MCF 10A (cell line): ENCODE measurements at regions of chr1 and their contacts with region 1.

Region 1: DNA sequence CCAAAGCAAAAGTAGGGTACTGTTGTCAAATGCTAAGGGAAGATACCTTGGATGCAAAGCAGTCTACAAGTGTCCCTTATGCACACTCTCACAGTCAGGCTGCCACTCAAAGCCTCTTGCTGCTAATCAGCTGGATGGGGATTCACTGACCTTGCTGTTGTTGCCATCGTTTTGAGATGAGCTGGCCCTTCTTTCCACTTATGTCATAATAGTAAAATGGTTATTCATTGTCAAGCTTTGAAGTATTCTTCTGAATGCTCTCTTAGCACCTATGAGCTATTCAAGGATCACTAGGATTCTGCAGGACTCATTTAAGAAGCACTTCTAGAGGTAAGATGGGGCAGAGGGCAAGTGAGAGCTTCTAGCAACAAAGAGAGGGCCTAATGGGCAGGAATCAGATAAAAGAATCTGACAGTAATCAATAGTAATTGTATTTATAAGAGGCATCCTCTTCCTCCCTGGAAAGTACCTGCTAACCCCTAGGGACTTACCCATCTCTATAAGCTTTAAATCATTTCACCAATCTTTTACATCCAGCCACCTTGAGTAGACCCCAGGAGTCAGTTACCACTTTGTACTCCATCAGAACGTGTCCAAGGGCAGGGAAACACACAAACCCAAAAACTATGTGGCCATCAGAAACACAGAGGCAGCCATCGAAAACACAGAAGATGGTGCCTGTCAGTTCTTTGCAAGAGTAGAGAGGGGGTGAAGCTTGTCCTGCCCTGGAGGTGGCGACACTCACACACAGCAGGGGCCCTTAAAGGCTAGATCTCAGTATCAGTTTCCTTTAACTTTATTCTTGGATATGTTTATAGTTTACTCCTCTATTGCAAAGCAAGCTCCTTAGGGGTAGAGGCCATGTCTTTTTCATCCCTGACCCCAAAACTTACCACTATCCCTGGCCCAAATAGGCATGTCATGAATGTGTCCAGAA is 103.7 kb upstream of the NFIA start:
- DNase-seq: peak; percentile 62
- H3K4me3 Mint-ChIP-seq: no peak overlapping the region
- H3K27ac Mint-ChIP-seq: no peak overlapping the region
- H3K4me1 Mint-ChIP-seq: peaks cover 3% of the 10 kb centered on the region
- H3K27me3 Mint-ChIP-seq: no peaks in the 10 kb centered on the region
- CTCF ChIP-seq: peak; percentile 76

Region 2: DNA sequence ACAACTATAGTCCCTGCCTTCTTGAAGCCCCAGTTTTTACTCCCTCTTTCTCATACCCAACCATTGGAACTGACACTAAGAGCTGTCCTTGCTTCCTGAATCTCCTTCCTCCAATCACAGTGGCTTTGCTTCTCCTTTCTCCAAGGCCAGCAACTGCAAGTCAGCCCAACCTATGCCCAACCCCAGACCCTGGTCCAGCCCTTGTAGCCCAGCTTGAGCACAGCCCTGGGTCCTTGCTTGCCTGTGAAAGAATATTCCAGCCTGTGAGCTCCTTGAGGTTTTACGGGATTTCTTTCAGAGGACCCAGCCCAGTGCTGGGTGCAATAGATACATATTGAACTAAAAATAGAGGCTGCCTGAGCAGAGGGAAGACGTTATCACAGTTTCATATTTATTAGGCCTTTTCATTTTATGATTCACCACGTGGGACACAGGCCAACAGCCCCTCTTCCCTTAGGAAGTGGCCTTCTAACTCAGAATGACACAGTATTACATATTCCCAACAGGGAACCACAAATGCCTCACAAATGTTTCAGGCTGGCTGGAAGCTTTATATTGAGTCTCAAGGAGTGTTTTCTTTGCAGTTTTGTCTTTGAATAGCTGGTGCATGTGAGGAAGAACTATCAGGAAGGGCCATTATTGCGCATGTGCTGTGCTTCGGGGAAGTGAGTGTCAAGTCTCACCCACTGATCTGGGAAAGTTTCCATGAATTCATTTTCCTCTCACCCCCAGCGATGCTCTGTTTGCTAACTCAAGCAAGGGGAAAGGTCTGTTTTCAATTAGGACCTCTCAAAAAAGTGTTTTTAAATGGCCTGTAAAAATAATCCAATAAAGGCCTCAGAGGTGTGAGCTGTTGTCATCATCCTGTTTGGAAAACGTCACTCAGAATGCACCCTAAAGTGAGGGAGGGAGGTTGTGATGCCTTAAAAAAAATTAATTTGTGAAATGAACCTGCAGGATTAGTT is 11.3 kb after region 1 on chr1:
- CTCF ChIA-PET with region 1: interaction called, 62 read pairs
- POLR2A ChIA-PET with region 1: interaction called, 3 read pairs
- intact Hi-C with region 1: no loop called
- DNase-seq: peak; percentile 29
- H3K4me3 Mint-ChIP-seq: no peak overlapping the region
- H3K27ac Mint-ChIP-seq: no peak overlapping the region
- H3K4me1 Mint-ChIP-seq: no peaks in the 10 kb centered on the region
- H3K27me3 Mint-ChIP-seq: no peaks in the 10 kb centered on the region
- CTCF ChIP-seq: no peak

Region 3: DNA sequence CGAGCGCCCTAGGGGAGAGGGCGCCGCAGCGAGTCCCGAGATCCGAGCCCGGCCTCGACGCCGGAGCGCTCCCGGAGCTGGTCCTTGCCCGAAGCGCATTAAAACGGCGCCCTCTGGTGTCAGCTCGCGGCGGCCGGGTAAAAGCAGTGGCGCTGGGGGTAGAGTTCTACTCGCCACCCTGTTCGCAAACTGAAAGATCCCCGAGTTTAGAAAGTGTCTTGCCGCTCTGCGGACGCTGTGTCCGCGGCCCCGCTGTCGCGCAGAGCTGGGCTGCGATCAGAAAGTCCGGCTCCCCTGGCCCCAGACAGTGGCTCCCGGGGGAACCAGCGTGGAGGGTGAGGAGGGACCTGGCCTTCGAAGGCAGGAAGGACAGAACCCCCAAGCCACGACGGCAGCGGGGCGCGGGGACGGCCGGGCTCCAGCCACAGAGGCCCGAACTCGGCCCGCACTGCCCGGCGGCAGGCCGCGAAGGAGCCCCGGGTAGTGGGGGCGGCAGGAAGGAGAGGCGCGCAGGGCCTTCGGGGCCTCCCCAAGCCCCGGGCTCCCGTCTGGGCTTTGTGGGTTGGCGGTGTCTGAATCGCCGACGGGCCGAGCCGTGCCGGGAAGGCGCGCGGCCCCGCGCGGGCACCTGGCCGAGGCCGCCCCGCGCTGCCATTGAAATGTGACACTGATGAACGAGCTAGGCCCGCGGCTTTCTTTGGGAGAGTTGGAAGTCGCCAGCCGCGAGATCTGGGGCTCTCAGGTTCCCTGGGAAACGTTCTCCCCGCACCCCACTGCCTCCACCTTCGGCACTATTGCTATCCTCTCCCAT is 64.5 kb after region 1 on chr1:
- CTCF ChIA-PET with region 1: interaction called, 100 read pairs
- POLR2A ChIA-PET with region 1: interaction called, 9 read pairs
- intact Hi-C with region 1: loop called (anchors 1 kb)
- DNase-seq: peak; percentile 64
- H3K4me3 Mint-ChIP-seq: peak overlapping the region; percentile 31
- H3K27ac Mint-ChIP-seq: no peak overlapping the region
- H3K4me1 Mint-ChIP-seq: peaks cover 12% of the 10 kb centered on the region
- H3K27me3 Mint-ChIP-seq: no peaks in the 10 kb centered on the region
- CTCF ChIP-seq: peak; percentile 77

Region 4: GRCh38 chr1:61221642-61222041 is 243.0 kb after region 1 on chr1:
- CTCF ChIA-PET with region 1: no interaction called
- POLR2A ChIA-PET with region 1: no interaction called
- intact Hi-C with region 1: loop called (anchors 5 kb)
- DNase-seq: no peak
- H3K4me3 Mint-ChIP-seq: no peak overlapping the region
- H3K27ac Mint-ChIP-seq: no peak overlapping the region
- H3K4me1 Mint-ChIP-seq: peaks cover 11% of the 10 kb centered on the region
- H3K27me3 Mint-ChIP-seq: no peaks in the 10 kb centered on the region
- CTCF ChIP-seq: no peak

Region 5: DNA sequence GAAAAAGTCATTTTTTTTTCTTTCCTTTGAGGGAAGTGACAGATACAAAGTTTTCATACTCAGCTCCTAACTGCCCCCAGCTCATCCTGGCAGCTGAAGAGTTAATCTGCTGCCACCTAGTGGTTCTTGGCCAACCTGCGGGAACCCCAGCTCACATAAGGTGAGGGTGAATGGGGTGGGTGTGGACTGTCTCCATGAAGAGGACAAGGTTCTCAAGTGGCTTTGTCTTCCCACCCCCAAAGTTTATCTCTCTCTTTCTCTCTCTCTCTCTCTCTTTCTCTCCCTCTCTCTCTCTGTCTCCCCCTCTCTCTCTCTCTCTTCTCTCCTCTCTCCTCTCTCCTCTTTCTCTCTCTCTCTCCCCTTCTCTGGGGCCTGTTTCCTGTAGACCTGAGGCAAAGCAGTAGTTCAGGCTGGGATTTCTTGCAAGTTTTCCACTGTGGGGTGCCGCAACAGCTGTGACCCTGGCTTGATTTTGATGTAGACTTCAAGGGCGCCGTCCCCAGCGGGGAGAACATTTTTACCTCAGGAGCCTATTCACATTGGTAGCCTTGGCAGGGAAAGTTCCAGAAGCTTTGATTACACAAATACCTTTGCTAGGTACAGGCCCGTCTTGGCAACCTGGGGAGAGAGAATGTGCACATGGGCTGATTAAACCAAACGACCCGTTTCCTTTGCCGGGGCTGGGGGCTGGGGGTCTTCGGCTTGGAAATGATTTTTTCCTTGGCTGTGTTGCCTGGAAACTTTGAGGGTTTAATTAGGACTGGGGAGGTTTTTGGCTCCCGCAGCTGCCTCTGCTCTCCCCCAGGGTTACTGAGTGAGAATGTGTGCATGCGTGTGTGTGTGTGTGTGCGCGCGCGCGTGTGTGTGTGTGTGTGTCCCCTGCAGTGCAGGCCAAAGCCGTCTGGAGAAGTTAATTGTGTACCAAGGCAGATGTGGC is 610.3 kb after region 1 on chr1:
- CTCF ChIA-PET with region 1: interaction called, 14 read pairs
- POLR2A ChIA-PET with region 1: interaction called, 3 read pairs
- intact Hi-C with region 1: loop called (anchors 1 kb)
- DNase-seq: peak; percentile 80
- H3K4me3 Mint-ChIP-seq: no peak overlapping the region
- H3K27ac Mint-ChIP-seq: no peak overlapping the region
- H3K4me1 Mint-ChIP-seq: peaks cover 25% of the 10 kb centered on the region
- H3K27me3 Mint-ChIP-seq: no peaks in the 10 kb centered on the region
- CTCF ChIP-seq: peak; percentile 80

Region 6: GRCh38 chr1:61851849-61852669 is 873.4 kb after region 1 on chr1:
- CTCF ChIA-PET with region 1: interaction called, 4 read pairs
- POLR2A ChIA-PET with region 1: no interaction called
- intact Hi-C with region 1: loop called (anchors 2 kb)
- DNase-seq: peak; percentile 74
- H3K4me3 Mint-ChIP-seq: no peak overlapping the region
- H3K27ac Mint-ChIP-seq: no peak overlapping the region
- H3K4me1 Mint-ChIP-seq: no peaks in the 10 kb centered on the region
- H3K27me3 Mint-ChIP-seq: no peaks in the 10 kb centered on the region
- CTCF ChIP-seq: peak; percentile 53